ENCODE measurements at regions of chr6 and their contacts with region 1.

Region 1: GRCh38 chr6:20997143-20997769 is 463.0 kb downstream of the CDKAL1 start:
- DNase-seq: no peak
- ATAC-seq: peak; percentile 73
- H3K4me3 ChIP-seq: no peak overlapping the region
- H3K27ac ChIP-seq: peak overlapping the region; percentile 24; the same call in 1 of the 2 replicates
- H3K4me1 ChIP-seq: peaks cover 9% of the 10 kb centered on the region
- H3K27me3 ChIP-seq: no peaks in the 10 kb centered on the region
- CTCF ChIP-seq: no peak
- EP300 ChIP-seq: no peak
- POLR2A ChIP-seq: no peak
- RAD21 ChIP-seq: no peak

Region 2: DNA sequence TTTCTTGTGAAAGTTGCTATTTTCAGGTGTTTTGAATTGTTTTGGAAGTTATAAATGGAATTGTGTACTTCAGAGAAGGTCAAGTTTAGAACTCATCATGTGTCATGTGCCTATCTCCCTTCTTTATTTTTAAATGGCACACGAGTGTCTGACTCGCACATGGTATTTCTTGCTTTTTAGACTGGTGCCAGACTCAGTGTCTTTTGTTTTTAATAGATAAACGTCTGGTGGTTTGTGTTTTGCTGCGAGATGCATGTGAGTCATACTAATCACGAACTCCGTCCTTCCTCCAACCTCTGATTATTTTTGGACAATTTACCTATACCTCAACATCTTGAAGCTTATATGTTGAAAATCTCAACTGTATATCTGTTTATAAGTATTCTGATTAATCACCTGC is 170.9 kb before region 1 on chr6:
- CTCF ChIA-PET with region 1: no interaction called
- POLR2A ChIA-PET with region 1: no interaction called
- RAD21 ChIA-PET with region 1: no interaction called
- SMC1A ChIA-PET with region 1: no interaction called
- in situ Hi-C with region 1: no loop called
- intact Hi-C with region 1: no loop called
- DNase-seq: no peak
- ATAC-seq: peak; percentile 36; the same call in 2 of the 3 replicates
- H3K4me3 ChIP-seq: no peak overlapping the region
- H3K27ac ChIP-seq: no peak overlapping the region
- H3K4me1 ChIP-seq: no peaks in the 10 kb centered on the region
- H3K27me3 ChIP-seq: no peaks in the 10 kb centered on the region
- CTCF ChIP-seq: no peak
- EP300 ChIP-seq: no peak; a peak in 1 of 4 replicates
- POLR2A ChIP-seq: no peak
- RAD21 ChIP-seq: no peak

Region 3: DNA sequence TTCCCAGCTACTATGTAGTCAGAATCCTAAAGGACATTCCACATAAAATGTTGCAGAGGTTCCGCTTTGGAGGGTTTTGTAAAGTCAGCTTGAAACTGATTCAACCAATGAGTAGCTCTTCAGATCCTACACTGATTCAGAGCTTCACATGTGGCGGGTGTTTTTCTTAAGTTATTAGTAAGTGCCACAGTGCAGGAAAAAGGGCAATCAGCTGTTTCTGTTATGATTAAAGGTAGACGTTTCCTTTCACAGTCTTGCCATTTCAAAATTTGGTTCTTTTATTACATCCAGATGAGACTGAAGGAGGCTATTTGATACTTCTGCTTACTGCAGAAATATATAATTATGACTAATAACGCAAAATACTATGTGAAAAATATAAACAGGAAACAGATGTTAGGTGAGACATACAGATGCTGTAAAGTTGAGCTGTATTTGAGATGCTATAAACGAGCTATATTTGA is 19.1 kb before region 1 on chr6:
- CTCF ChIA-PET with region 1: no interaction called
- POLR2A ChIA-PET with region 1: interaction called, 5 read pairs
- RAD21 ChIA-PET with region 1: interaction called, 15 read pairs
- SMC1A ChIA-PET with region 1: interaction called, 10 read pairs
- in situ Hi-C with region 1: no loop called
- intact Hi-C with region 1: no loop called
- DNase-seq: peak; percentile 25
- ATAC-seq: peak; percentile 96
- H3K4me3 ChIP-seq: no peak overlapping the region
- H3K27ac ChIP-seq: no peak overlapping the region
- H3K4me1 ChIP-seq: peaks cover 11% of the 10 kb centered on the region; the same call in 1 of the 2 replicates
- H3K27me3 ChIP-seq: no peaks in the 10 kb centered on the region
- CTCF ChIP-seq: no peak
- EP300 ChIP-seq: peak; percentile 28 to 38; a peak in 2 of 4 replicates
- POLR2A ChIP-seq: no peak
- RAD21 ChIP-seq: peak; percentile 9; the same call in 1 of the 2 replicates

Region 4: DNA sequence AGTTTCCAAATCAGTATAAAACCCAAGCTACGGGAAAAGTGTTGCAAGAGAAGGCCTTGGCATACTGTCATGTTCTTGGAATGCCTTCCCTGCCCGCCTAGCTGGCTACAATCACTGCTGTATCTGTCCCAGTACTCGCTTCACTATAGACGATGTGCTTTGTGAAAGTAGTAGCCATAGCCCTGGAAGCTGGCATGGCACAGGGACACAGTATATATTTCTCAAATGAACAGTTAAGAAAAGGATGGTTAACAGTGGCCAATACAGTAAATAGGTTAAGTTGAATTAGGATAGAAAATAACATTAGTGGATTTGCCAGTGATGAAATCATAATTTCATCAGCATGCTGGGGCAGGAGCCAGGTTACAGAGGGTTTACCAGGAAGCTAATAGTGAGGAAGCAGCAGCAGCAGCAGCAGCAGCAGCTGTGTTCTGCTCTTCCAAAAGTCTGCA is 36.3 kb after region 1 on chr6:
- CTCF ChIA-PET with region 1: no interaction called
- POLR2A ChIA-PET with region 1: no interaction called
- RAD21 ChIA-PET with region 1: interaction called, 3 read pairs
- SMC1A ChIA-PET with region 1: interaction called, 10 read pairs
- in situ Hi-C with region 1: no loop called
- intact Hi-C with region 1: no loop called
- DNase-seq: no peak
- ATAC-seq: no peak
- H3K4me3 ChIP-seq: no peak overlapping the region
- H3K27ac ChIP-seq: no peak overlapping the region
- H3K4me1 ChIP-seq: peaks cover 4% of the 10 kb centered on the region; the same call in 1 of the 2 replicates
- H3K27me3 ChIP-seq: no peaks in the 10 kb centered on the region
- CTCF ChIP-seq: no peak
- EP300 ChIP-seq: no peak
- POLR2A ChIP-seq: no peak
- RAD21 ChIP-seq: no peak